Ascending aorta (tissue), 2 donors: ENCODE measurements at regions of chr2 and their contacts with region 1.

Region 1: DNA sequence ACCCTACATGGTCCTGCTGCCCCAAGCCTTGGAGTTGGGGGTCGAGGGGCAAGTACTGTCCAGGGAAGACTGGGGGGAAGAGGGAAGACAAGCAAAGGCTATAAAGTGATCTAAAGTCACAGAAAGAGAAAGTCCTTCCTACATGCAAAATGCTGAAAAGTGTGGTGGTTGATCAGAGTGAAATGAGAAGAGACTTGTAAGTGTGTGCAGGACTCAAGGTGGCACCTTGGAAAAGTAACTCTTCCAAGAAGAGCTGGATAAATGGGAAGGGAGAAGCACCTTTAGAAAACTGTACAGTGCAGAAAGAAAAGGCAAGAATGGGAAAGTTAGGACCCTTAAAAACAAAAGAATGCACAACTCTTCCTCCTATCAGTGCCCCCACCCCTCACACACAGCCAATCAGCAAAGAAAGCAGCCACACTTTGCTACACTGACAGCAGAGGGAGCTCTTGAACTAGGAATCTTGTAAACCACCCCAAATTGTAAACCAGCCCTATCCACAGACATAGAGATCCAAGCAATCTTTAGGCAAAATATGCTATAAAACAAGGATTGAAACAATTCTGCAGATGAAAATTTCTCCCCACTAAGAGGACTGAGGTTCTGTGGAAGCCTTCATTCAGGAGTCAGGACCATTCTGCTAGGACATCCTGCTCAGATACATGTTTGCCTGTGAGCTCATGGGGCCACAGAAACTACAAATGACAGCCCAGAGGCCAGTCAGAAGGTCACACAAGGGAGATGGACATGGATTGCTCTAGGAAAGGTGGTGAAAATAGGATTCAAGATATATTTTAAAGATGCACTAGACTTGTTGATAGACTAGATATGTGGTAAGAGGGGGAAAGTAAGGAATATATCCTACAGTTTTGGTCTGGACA is 146.4 kb downstream of the FTCDNL1 start:
- DNase-seq: no peak
- H3K4me3 ChIP-seq: no peak overlapping the region
- H3K27ac ChIP-seq: no peak overlapping the region
- H3K4me1 ChIP-seq: no peaks in the 10 kb centered on the region
- H3K27me3 ChIP-seq: no peaks in the 10 kb centered on the region
- CTCF ChIP-seq: peak in 2 of 3 experiments; percentile 12 to 39

Region 2: GRCh38 chr2:199850718-199851500 is 146.3 kb after region 1 on chr2 and contains the start of gene FTCDNL1:
- intact Hi-C with region 1: loop called (anchors 10 kb)
- DNase-seq: peak in 1 of 2 donors; percentile 76
- H3K4me3 ChIP-seq: peak within 1 kb of the TSS; percentile 67 to 75
- H3K27ac ChIP-seq: no peak within 1 kb of the TSS
- H3K4me1 ChIP-seq: peaks cover 0 to 5% of the 10 kb centered on the region in 2 donors
- H3K27me3 ChIP-seq: no peaks in the 10 kb centered on the region
- CTCF ChIP-seq: peak in 2 of 3 experiments; percentile 12 to 26
- total RNA-seq, gene FTCDNL1: 3.4 TPM